K562 (cell line): ENCODE measurements at regions of chr12 and their contacts with region 1.

Region 1: GRCh38 chr12:124917135-124917840 is 2.8 kb upstream of the UBC start:
- DNase-seq: peak; percentile 77 to 98 (median 82)
- ATAC-seq: peak; percentile 86
- H3K4me3 ChIP-seq: peak overlapping the region; percentile 94
- H3K27ac ChIP-seq: peak overlapping the region; percentile 100
- H3K4me1 ChIP-seq: peaks cover 27 to 50% of the 10 kb centered on the region in 2 experiments
- H3K27me3 ChIP-seq: no peaks in the 10 kb centered on the region
- CTCF ChIP-seq: no peak
- EP300 ChIP-seq: peak; percentile 85
- POLR2A ChIP-seq: peak; percentile 80; the same call in 1 of the 2 replicates
- RAD21 ChIP-seq: 0 out of 4 replicates have a peak, but pooled peaks of 1 of the 2 experiments have one; percentile 20

Region 2: GRCh38 chr12:123948796-123949769 is 968.2 kb before region 1 on chr12:
- CTCF ChIA-PET with region 1: no interaction called
- POLR2A ChIA-PET with region 1: no interaction called
- in situ Hi-C with region 1: no loop called
- intact Hi-C with region 1: no loop called
- DNase-seq: no peak
- ATAC-seq: no peak
- H3K4me3 ChIP-seq: no peak overlapping the region
- H3K27ac ChIP-seq: no peak overlapping the region
- H3K4me1 ChIP-seq: peaks cover 8 to 9% of the 10 kb centered on the region in 2 experiments; a peak in 4 of 5 replicates
- H3K27me3 ChIP-seq: peaks cover 13 to 21% of the 10 kb centered on the region in 2 experiments; a peak in 4 of 5 replicates
- CTCF ChIP-seq: no peak
- EP300 ChIP-seq: no peak
- POLR2A ChIP-seq: no peak
- RAD21 ChIP-seq: no peak

Region 3: GRCh38 chr12:124869034-124869665 is 48.1 kb before region 1 on chr12:
- CTCF ChIA-PET with region 1: no interaction called
- POLR2A ChIA-PET with region 1: interaction called, 18 read pairs
- in situ Hi-C with region 1: no loop called
- intact Hi-C with region 1: no loop called
- DNase-seq: peak; percentile 82 to 85 (median 84)
- ATAC-seq: peak; percentile 80
- H3K4me3 ChIP-seq: peak overlapping the region; percentile 14
- H3K27ac ChIP-seq: peak overlapping the region; percentile 86; the same call in 2 of the 3 replicates
- H3K4me1 ChIP-seq: peaks cover 39 to 43% of the 10 kb centered on the region in 2 experiments
- H3K27me3 ChIP-seq: no peaks in the 10 kb centered on the region
- CTCF ChIP-seq: no peak
- EP300 ChIP-seq: no peak
- POLR2A ChIP-seq: peak; percentile 55; the same call in 1 of the 2 replicates
- RAD21 ChIP-seq: no peak

Region 4: DNA sequence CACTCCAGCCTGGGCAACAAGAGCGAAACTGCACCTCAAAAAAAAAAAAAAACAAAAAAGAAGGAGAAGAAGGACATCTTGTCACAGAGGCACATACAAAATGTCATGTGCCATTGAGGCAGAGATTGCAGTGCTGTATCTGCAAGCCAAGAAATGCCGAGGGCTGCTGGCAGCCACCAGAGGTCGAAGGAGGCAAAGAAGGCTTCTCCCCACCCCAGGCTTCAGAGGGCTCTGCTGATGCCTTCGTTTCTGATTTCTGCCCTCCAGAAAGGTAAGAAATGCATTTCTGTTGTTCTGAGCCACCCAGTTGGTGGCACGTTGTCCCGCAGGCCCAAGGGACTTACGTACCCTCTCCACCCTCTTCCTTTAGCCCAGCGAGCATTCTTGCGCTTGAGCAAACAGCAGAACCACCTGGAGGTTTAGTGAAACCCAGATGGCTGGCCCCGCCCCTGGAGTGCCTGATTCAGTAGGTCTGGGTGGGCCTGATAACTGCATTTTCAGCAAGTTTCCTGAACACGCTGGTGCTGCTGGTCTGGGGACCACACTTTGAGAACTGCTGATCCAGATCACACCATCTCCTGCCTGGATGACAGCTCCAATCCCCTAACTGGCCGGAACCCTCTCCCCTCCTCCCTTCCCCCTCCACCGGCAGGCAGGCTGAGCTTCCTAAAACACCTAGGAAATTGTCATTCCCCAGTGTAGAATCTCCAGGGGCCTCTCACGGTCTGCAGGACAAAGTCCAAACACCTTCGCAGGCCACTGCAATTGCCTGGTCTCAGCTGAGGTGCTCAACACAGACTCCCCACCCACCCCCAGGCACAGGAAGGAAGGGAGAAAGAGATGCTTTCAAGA is 32.5 kb before region 1 on chr12:
- CTCF ChIA-PET with region 1: no interaction called
- POLR2A ChIA-PET with region 1: interaction called, 16 read pairs
- in situ Hi-C with region 1: no loop called
- intact Hi-C with region 1: no loop called
- DNase-seq: peak; percentile 77 to 98 (median 82)
- ATAC-seq: peak; percentile 87
- H3K4me3 ChIP-seq: no peak overlapping the region
- H3K27ac ChIP-seq: peak overlapping the region; percentile 57; the same call in 2 of the 3 replicates
- H3K4me1 ChIP-seq: peaks cover 36 to 55% of the 10 kb centered on the region in 2 experiments
- H3K27me3 ChIP-seq: no peaks in the 10 kb centered on the region
- CTCF ChIP-seq: peak in 2 of 3 experiments; percentile 25 to 28; a peak in 2 of 6 replicates
- EP300 ChIP-seq: peak; percentile 85
- POLR2A ChIP-seq: no peak
- RAD21 ChIP-seq: no peak

Region 5: DNA sequence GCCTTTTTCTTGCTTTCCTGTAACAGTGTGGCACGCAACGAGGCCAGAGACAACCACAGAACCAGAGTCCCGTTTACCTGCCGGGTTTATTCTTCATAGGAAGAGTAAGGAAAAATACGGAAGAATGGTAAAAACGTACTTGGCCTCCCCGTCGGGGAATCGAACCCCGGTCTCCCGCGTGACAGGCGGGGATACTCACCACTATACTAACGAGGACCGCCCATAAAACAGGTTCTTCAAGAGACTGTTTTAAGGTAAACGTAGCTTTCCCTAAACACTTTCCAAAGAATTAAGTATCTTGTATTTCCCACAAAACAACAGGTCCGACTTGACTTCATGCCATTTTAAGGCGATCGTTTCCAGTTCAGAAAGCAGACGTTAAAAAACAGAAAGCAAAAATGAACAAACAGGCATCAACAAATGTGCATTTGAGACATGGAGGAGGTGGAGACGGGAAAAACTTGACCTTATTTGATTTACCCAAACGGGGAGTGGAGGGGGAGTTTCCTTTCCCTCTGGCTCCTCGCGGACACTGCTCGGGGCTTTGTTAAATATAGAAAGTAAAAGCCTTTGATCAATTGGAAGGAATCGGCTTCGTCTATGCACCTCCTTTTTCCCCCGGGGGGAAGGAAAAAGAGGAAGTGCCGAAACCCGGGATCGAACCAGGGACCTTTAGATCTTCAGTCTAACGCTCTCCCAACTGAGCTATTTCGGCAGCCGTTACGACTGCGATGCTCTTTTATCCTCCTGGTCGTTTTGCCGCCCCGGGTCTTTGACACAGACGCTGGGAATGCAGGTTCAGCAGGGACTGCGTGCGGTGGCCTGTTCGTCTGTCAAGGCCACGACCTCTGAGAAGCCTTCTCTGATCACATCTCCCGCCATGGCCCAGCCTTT is 10.2 kb after region 1 on chr12:
- CTCF ChIA-PET with region 1: no interaction called
- POLR2A ChIA-PET with region 1: interaction called, 123 read pairs
- in situ Hi-C with region 1: no loop called
- intact Hi-C with region 1: loop called (anchors 1 kb)
- DNase-seq: peak; percentile 78 to 92 (median 85)
- ATAC-seq: peak; percentile 80
- H3K4me3 ChIP-seq: peak overlapping the region; percentile 64
- H3K27ac ChIP-seq: peak overlapping the region; percentile 90
- H3K4me1 ChIP-seq: peaks cover 16 to 19% of the 10 kb centered on the region in 2 experiments; a peak in 4 of 5 replicates
- H3K27me3 ChIP-seq: no peaks in the 10 kb centered on the region
- CTCF ChIP-seq: peak in 1 of 3 experiments; percentile 10; a peak in 1 of 6 replicates
- EP300 ChIP-seq: peak; percentile 73
- POLR2A ChIP-seq: no peak
- RAD21 ChIP-seq: 0 out of 4 replicates have a peak, but pooled peaks of 1 of the 2 experiments have one; percentile 10

Region 6: DNA sequence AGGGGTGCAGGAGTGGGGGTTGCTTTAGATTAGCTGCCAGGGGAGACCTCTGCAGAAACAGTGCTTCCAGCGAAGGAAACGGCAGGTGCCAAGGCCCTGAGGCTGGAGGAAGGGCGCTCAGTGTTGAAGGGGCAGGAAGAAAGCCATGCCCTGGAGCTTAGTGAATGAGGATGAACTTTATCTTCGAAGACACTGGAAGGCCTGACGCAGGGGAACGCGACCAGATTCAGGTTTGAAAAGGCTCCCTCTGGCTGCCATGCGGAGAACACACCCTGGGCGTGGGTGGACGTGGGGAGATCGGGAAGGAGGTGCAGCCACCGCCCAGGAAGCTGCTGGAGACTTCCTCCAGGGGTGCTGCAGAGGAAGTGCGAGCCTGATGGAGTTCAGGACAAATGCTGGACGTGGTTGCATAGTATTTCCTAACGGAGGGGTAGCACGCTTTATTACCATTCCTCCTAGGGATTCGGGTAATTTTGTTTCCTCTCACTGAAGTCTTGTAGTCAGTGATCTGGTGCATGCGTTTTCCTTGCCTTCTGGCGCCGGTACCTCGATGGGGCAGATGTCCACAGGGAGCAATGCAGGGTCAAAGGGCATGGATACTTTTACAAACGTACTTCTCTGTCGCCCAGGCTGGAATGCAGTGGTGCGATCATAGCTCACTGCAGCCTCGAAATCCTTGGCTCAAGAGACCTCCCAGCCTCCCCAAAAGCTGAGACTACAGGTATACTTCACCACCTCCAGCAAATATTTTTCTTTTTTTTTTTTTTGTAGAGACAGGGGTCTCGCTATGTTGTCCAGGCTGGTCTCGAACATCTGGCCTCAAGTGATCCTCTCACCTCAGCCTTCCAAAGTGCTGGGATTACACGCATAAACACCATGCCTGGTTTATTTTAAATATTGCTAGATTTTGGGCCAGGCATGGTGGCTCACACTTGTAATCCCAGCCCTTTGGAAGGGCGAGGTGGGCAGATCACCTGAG is 23.6 kb after region 1 on chr12:
- CTCF ChIA-PET with region 1: interaction called, 4 read pairs
- POLR2A ChIA-PET with region 1: interaction called, 127 read pairs
- in situ Hi-C with region 1: no loop called
- intact Hi-C with region 1: loop called (anchors 1 kb)
- DNase-seq: peak; percentile 82 to 97 (median 86)
- ATAC-seq: peak; percentile 84
- H3K4me3 ChIP-seq: peak overlapping the region; percentile 54
- H3K27ac ChIP-seq: peak overlapping the region; percentile 87
- H3K4me1 ChIP-seq: peaks cover 9 to 12% of the 10 kb centered on the region in 2 experiments; a peak in 3 of 5 replicates
- H3K27me3 ChIP-seq: no peaks in the 10 kb centered on the region
- CTCF ChIP-seq: peak; percentile 98 to 99 (median 98)
- EP300 ChIP-seq: peak; percentile 56
- POLR2A ChIP-seq: peak; percentile 69
- RAD21 ChIP-seq: peak; percentile 47 to 61